Posterior cingulate gyrus (tissue), 11 donors: ENCODE measurements at regions of chr2 and their contacts with region 1.

Region 1: DNA sequence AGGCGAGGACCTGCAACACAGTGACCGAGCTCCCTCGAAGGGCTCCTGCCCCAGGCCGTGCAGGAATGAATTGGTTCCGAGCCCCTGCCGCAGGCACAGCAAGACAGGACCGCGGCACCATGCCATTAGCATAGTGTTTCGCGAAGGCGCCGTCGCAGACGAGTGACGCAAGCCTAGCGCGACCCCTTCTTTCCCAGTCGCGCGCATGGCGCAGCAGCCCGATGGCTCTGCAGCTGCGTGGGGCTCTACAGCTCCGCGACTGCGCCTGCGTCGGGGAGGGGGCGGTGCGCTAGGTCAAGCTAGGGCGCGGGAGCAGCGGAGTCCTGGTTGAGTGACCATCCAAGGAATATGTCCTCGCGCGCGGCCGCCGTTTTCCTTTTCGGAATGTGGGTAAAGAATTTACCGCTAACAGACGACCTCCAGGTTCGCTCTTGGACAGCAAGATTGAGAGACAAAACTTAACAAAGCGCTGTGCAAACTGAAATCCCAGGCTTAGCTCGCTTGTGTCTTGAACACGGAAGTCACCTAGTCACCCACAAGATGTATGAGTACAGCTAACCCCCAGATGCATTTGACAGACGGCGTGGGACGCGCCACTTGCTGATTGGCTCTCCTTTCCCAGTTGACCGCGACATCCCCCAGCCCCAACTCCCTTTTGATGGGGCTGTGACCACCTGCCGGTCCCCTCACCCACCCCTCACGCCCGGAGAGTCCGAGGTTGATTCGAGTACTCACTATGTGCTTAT is at the start of gene TRMT61B:
- DNase-seq: peak; percentile 93 to 99 (median 96)

Region 2: GRCh38 chr2:28566521-28567041 is 303.7 kb before region 1 on chr2:
- intact Hi-C with region 1: loop called (anchors 10 kb)
- DNase-seq: peak; percentile 71 to 97 (median 86)

Region 3: DNA sequence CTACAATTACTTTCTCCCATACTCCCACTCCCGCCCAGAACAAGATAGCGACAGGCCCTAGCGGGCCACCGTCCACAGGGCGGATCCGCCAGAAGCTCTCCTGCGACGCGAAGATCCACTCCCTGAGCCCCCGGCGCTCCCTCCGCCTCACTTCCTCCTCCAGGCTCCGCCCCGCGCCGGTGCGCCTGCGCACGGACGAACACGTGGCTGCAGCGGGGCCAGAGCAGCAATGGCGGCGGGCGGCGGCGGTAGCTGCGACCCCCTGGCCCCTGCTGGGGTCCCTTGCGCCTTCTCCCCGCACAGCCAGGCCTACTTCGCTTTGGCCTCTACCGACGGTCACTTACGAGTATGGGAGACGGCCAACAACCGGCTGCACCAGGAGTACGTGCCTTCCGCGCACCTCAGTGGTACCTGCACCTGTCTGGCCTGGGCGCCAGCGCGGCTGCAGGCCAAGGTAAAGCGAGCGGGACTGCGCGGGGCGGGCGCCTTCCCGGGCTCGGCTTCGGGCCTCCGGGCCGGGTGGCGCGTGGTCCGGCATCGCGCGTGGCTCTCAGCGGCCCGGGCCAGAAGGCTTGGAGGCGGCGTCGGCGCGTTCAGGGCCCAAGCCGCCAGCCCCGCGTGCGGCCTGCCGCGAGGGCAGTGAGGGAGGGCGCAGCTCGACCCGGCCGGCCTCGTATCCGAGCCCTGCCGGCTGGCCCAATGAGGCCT is 24.3 kb after region 1 on chr2 and contains the start of gene WDR43:
- intact Hi-C with region 1: loop called (anchors 2 kb)
- DNase-seq: peak; percentile 92 to 100 (median 97)